ENCODE measurements at regions of chr4 and their contacts with region 1.

Region 1: DNA sequence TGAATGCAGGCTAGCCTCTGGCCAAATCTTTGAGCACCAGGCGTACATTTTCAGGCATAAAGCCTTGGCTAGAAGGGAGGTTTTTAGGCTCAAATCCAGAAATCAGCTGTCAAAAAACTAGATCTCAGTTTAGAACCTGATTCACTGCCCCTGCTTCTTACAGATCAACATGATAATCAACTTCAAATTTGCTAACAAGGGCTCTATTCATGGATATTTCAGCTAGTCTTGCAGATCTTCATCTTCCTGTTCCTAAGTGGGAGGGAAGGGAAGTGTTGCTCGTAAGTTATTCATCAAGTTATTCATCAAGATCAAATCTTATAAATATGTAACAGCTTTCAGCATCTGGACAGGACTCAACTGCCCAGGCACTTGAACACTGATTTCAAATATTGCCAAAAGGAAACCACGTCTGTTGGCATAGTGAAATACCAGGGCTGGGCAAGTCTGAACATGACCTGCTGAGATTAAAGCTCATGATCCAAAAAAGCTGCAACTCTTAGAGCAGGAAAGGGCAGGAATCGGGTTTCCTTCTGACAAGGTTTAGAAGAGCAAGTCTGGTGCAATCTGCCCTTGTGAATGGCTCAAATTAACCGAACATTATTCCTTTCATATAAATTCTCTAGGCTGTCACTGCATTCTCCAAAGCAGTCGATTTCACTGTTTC is 200.3 kb downstream of the PDGFC start:
- DNase-seq: peak; percentile 55 to 74
- ATAC-seq: peak; percentile 94 to 97
- H3K4me3 ChIP-seq: peak overlapping the region; percentile 15 to 46 (median 24)
- H3K27ac ChIP-seq: peak overlapping the region; percentile 64 to 77 (median 76)
- H3K4me1 ChIP-seq: peaks cover 43 to 51% of the 10 kb centered on the region in 2 donors
- H3K27me3 ChIP-seq: no peaks in the 10 kb centered on the region
- CTCF ChIP-seq: no peak
- POLR2A ChIP-seq: no peak

Region 2: GRCh38 chr4:156575430-156576073 is 195.8 kb before region 1 on chr4:
- in situ Hi-C with region 1: no loop called
- intact Hi-C with region 1: no loop called
- DNase-seq: no peak
- ATAC-seq: no peak
- H3K4me3 ChIP-seq: no peak overlapping the region
- H3K27ac ChIP-seq: no peak overlapping the region
- H3K4me1 ChIP-seq: no peaks in the 10 kb centered on the region
- H3K27me3 ChIP-seq: no peaks in the 10 kb centered on the region
- CTCF ChIP-seq: no peak
- POLR2A ChIP-seq: no peak

Region 3: DNA sequence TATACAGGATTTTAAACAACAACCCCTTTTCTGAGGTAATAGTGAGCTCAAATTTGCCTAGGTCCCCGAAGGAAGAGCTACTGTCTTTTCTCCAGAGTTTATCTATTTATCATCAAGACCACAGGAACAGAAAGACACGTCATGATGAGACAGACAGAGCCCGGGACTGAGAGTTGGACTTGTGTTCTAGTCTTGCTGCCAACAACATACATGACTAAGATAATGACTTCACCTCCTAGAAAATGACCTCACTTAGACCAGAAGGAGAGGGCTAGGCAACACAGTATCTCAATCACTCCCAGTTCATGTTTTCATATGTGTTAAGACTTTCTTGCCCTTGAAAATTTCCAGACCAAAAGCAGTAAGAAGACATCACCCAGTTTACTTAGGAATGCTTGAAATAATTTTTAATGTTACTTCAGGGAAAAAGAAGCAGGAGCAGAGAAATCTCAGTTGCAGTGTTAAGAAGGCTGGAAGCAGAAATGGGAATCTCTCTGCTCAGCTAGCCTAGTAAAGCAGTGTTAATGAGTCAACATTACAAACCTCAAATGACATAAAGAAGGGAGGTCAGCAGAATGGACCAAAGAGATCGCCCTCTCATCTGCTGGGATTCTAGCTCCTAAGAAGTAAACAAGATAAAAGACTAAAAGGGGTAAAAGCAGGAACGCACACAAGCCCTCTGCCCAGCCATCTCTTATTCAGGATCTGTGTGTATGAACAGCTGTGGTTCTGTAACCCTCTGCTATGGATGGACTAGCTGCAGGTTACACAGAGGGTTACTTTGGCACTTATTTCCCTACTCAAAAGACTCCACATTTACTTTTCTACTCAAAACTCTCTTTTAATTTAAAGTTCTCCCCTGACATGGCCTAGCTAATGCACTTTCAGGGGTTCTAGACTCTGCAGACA is 175.5 kb after region 1 on chr4:
- in situ Hi-C with region 1: loop called in 1 of 4 experiments (anchors 25 kb)
- intact Hi-C with region 1: loop called (anchors 5 kb)
- DNase-seq: peak; percentile 18 to 38
- ATAC-seq: peak; percentile 79 to 87
- H3K4me3 ChIP-seq: no peak overlapping the region
- H3K27ac ChIP-seq: peak overlapping the region; percentile 28 to 71 (median 50)
- H3K4me1 ChIP-seq: peaks cover 65 to 68% of the 10 kb centered on the region in 2 donors
- H3K27me3 ChIP-seq: no peaks in the 10 kb centered on the region
- CTCF ChIP-seq: no peak
- POLR2A ChIP-seq: peak in 1 of 2 donors; percentile 35